Right lobe of liver (tissue), 6 donors: ENCODE measurements at regions of chr6 and their contacts with region 1.

Region 1: GRCh38 chr6:17589406-17590096 is 10.6 kb upstream of the FAM8A1 start:
- DNase-seq: no peak
- ATAC-seq: no peak
- H3K4me3 ChIP-seq: no peak overlapping the region
- H3K27ac ChIP-seq: no peak overlapping the region
- H3K4me1 ChIP-seq: peaks cover 0 to 6% (median 0%) of the 10 kb centered on the region in 4 donors
- H3K27me3 ChIP-seq: no peaks in the 10 kb centered on the region
- CTCF ChIP-seq: no peak
- POLR2A ChIP-seq: no peak

Region 2: DNA sequence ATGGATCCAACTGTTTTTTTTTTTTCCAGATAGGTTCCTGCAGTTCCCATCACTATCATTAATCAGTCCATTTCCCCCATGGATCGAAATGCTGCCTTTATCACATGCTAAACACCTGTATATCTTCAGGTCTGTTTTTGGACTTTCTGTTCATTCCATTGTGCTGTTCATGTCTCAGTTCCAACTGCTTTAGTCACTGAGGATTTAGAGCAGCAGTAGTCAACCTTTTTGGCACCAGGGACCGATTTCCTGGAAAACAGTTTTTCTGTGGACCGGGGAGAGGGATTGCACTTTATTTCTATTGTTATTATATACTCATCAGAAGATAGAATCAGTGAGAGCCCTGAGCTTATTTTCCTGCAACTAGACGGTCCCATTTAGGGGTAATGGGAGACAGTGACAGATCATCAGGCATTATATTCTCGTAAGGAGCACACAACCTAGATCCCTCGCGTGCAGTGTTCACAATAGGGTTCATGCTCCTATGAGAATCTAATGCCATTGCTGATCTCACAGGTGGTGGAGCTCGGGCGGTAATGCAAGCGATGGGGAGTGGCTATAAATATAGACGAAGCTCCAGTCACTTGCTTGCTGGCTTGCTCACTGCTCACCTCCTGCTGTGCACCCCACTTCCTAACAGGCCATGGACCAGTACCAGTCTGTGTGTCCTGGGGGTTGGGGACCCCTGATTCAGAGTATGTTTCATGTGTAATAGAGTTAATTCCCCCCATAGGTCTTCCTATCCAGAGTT is 150.1 kb before region 1 on chr6:
- intact Hi-C with region 1: no loop called
- DNase-seq: no peak
- ATAC-seq: no peak
- H3K4me3 ChIP-seq: no peak overlapping the region
- H3K27ac ChIP-seq: no peak overlapping the region
- H3K4me1 ChIP-seq: no peaks in the 10 kb centered on the region
- H3K27me3 ChIP-seq: no peaks in the 10 kb centered on the region
- CTCF ChIP-seq: no peak
- POLR2A ChIP-seq: no peak

Region 3: DNA sequence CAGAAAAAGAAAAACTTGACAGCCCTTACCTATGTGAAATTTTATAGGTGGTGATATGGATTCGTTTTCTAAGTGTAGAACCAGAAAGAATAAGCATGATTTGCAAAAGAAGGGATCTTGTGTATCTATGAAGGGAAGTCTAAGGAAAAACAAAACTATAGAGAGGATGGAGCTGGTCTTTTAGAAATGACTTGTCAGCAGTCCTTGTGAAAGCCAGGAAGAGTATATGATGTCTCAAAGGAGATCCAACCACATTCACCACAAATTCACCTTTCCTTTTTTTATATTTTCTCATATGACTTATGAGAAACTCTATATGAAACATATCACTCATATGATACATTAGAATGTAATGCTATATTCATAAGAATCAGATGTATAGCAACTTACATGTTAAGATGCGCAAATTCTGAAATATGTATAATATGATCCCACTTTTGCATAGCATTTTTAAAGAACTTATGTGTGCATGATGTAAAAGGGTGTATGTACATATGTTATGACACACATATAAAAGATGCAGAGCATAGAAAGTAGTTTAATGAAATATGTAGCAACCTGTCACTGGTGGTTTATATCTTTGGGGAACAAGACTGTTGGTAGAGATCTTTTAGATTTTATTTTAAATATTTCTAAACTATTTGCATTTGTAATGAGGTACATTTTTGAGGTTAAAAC is 209.1 kb after region 1 on chr6:
- intact Hi-C with region 1: loop called in 1 of 2 experiments (anchors 5 kb)
- DNase-seq: no peak
- ATAC-seq: no peak
- H3K4me3 ChIP-seq: no peak overlapping the region
- H3K27ac ChIP-seq: no peak overlapping the region
- H3K4me1 ChIP-seq: no peaks in the 10 kb centered on the region
- H3K27me3 ChIP-seq: no peaks in the 10 kb centered on the region
- CTCF ChIP-seq: no peak
- POLR2A ChIP-seq: no peak